Common myeloid progenitor, CD34-positive (primary cell): ENCODE measurements at regions of chr12 and their contacts with region 1.

Region 1: GRCh38 chr12:118372541-118373495 is at the start of gene TAOK3:
- DNase-seq: peak; percentile 98 to 99 (median 99)
- H3K4me3 ChIP-seq: peak within 1 kb of the TSS; percentile 96 to 99 (median 97)
- H3K27ac ChIP-seq: peak within 1 kb of the TSS; percentile 86 to 93
- H3K4me1 ChIP-seq: peaks cover 40 to 58% (median 50%) of the 10 kb centered on the region in 4 experiments
- H3K27me3 ChIP-seq: no peaks in the 10 kb centered on the region

Region 2: GRCh38 chr12:118183705-118184104 is 189.1 kb before region 1 on chr12:
- CTCF ChIA-PET with region 1: interaction called, 25 read pairs
- POLR2A ChIA-PET with region 1: no interaction called
- DNase-seq: no peak
- H3K4me3 ChIP-seq: no peak overlapping the region
- H3K27ac ChIP-seq: peak overlapping the region in 1 of 2 experiments; percentile 18
- H3K4me1 ChIP-seq: peaks cover 0 to 1% (median 0%) of the 10 kb centered on the region in 4 experiments
- H3K27me3 ChIP-seq: no peaks in the 10 kb centered on the region

Region 3: GRCh38 chr12:118307069-118307954 is 65.5 kb before region 1 on chr12:
- CTCF ChIA-PET with region 1: interaction called, 135 read pairs
- POLR2A ChIA-PET with region 1: interaction called, 8 read pairs
- DNase-seq: peak; percentile 64 to 82 (median 82)
- H3K4me3 ChIP-seq: peak overlapping the region in 4 of 7 experiments; percentile 7 to 64 (median 48)
- H3K27ac ChIP-seq: peak overlapping the region; percentile 23 to 77
- H3K4me1 ChIP-seq: peaks cover 20 to 61% (median 40%) of the 10 kb centered on the region in 4 experiments
- H3K27me3 ChIP-seq: no peaks in the 10 kb centered on the region

Region 4: GRCh38 chr12:118330421-118331018 is 42.3 kb before region 1 on chr12:
- CTCF ChIA-PET with region 1: interaction called, 23 read pairs
- POLR2A ChIA-PET with region 1: interaction called, 3 read pairs
- DNase-seq: peak; percentile 93 to 99 (median 98)
- H3K4me3 ChIP-seq: peak overlapping the region in 2 of 7 experiments; percentile 50 to 55
- H3K27ac ChIP-seq: peak overlapping the region; percentile 80 to 88
- H3K4me1 ChIP-seq: peaks cover 21 to 81% (median 65%) of the 10 kb centered on the region in 4 experiments
- H3K27me3 ChIP-seq: no peaks in the 10 kb centered on the region